Naive thymus-derived CD4-positive, alpha-beta T cell (primary cell): ENCODE measurements at regions of chr20 and their contacts with region 1.

Region 1: DNA sequence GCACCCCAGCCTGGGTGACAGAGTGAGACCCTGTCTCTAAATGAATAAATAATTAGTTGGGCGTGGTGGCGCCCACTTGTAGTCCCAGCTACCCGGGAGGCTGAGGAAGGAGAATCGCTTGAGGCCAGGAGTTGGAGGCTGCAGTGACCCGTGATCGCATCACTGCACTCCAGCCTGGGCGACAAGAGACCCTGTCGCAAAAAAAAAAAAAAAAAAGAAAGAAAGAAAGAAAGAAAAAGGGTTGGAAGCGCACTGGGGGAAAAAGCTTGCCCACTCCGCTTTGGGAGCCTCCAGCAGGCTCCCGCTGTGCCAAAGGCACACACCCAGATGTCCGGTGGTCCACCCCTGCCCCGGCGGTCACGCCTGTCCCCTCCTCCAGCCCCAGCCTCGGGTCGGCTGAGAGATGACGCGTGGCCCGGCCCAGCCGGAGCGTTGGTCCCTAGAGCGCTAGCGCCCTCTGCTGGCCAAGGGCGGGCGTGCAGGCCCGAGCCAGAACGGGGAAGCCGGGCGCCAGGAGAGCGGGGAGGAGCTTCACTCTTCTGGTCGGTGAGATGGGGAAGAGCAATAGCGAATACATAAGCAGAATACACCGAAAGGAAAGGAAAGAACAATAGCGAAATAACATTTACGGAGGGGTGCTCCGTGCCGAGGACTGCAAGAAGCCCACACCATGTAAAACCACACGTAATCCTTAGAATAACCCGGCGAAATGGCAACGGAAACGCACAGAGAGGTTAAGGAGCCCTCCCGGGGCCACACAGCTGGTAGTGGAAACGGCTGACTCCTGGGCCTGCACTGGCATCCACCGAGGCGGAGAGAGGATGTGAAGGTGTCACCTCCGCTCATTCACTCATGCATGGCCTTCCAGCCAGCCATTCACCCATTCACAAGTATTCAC is 41.7 kb downstream of the UBE2V1 start:
- DNase-seq: peak; percentile 75 to 99 (median 88)
- ATAC-seq: peak; percentile 100
- H3K4me3 ChIP-seq: peak overlapping the region; percentile 51
- H3K4me3 Mint-ChIP-seq: peak overlapping the region; percentile 59 to 87 (median 72)
- H3K27ac ChIP-seq: no peak overlapping the region
- H3K27ac Mint-ChIP-seq: peak overlapping the region in 1 of 9 donors; percentile 18
- H3K4me1 ChIP-seq: peaks cover 0 to 4% of the 10 kb centered on the region in 2 donors
- H3K4me1 Mint-ChIP-seq: peaks cover 0 to 5% (median 5%) of the 10 kb centered on the region in 7 donors
- H3K27me3 ChIP-seq: no peaks in the 10 kb centered on the region
- H3K27me3 Mint-ChIP-seq: peaks cover 0 to 5% (median 4%) of the 10 kb centered on the region in 5 donors

Region 2: DNA sequence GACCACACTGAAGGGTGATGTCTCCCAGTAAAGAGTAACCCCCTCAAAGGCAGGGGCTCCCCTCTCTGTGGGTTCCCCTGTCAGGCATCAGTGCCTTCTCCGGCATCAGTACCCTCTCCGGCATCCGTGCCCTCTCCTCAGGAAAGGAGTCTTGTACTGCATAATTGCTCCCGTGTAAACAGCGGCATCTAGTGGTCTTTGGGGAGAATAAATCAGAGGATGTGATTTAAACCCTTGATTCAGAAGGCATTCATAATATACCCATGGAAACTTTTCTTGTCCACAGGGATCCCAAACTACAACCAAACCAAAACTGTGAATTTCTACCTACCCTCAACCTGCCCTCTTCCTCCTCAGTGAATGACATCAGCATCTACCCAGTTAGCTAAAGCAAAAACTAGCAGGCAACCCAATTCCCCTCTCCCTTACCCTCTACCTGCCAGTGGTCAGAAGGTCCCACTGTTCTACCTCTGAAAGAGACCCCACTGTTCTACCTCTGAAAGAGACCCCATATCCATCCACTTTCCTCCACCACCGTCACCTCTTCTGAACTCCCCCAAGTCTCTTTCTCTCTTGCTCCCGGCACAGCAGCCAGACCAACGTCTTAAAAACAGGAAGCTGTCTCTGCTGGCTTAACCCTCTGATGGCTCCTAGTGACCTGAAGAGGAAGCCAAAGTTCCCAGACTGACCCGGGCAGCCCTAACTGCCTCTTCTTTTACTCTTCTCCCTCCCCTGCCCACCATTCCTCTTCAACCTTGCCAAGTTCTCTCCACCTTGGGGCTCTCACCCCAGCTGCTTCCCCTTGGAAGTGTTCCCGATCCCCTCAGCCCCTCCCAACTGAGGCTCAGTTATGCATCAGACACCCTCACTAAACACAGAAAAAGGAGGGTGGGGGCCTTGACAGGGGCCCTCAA is 14.5 kb after region 1 on chr20:
- CTCF ChIA-PET with region 1: interaction called, 55 read pairs
- POLR2A ChIA-PET with region 1: interaction called, 7 read pairs
- intact Hi-C with region 1: loop called in 1 of 2 experiments (anchors 1 kb)
- DNase-seq: peak in 7 of 9 donors; percentile 29 to 63 (median 50)
- ATAC-seq: peak; percentile 87
- H3K4me3 ChIP-seq: peak overlapping the region; percentile 63
- H3K4me3 Mint-ChIP-seq: peak overlapping the region; percentile 75 to 91 (median 86)
- H3K27ac ChIP-seq: peak overlapping the region; percentile 43
- H3K27ac Mint-ChIP-seq: peak overlapping the region; percentile 64 to 93 (median 85)
- H3K4me1 ChIP-seq: peaks cover 9 to 13% of the 10 kb centered on the region in 2 donors
- H3K4me1 Mint-ChIP-seq: peaks cover 20 to 43% (median 32%) of the 10 kb centered on the region in 7 donors
- H3K27me3 ChIP-seq: no peaks in the 10 kb centered on the region
- H3K27me3 Mint-ChIP-seq: no peaks in the 10 kb centered on the region

Region 3: DNA sequence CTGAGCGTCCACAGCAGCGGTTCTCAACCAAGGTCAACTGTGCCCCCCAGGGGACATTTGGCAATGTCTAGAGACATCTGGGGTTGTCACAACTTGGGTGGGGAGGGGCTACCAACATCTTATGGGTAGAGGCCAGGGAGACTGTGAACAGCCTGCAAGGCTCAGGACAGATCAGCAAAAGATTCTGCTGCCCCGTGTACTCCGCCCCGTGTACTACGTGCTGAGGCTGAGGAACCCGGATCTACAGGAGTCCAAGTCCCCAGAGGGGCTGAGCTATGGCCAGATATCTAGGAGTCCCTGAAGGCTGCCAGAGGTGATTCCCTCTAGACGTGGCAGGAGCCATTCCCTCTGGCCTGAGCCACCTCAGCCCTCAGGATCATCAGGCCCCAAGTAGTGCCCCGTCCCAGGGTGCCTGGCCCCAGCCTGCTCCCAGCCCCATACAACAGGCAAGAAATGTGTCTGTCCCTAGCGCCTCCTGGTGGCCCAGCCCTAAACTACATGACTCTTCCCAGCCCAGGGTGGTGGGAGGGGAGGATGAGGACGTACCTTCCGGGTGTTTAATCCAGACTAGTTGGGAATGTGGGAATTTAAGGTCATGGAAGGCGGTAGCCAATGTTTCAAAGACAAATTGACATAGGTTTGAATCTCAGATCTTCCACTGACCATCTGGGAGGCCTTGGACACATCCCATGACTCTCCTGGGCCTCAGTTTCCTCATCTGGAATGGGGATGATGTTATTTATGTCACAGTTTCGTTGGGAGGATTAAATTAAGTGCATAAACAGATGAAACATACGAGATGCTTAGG is 389.4 kb after region 1 on chr20:
- CTCF ChIA-PET with region 1: no interaction called
- POLR2A ChIA-PET with region 1: no interaction called
- intact Hi-C with region 1: loop called in 1 of 2 experiments (anchors 1 kb)
- DNase-seq: peak; percentile 54 to 87 (median 74)
- ATAC-seq: peak; percentile 95
- H3K4me3 ChIP-seq: no peak overlapping the region
- H3K4me3 Mint-ChIP-seq: no peak overlapping the region
- H3K27ac ChIP-seq: no peak overlapping the region
- H3K27ac Mint-ChIP-seq: peak overlapping the region in 1 of 9 donors; percentile 65
- H3K4me1 ChIP-seq: no peaks in the 10 kb centered on the region
- H3K4me1 Mint-ChIP-seq: peaks cover 0 to 18% (median 4%) of the 10 kb centered on the region in 7 donors
- H3K27me3 ChIP-seq: no peaks in the 10 kb centered on the region
- H3K27me3 Mint-ChIP-seq: peaks cover 5 to 14% (median 7%) of the 10 kb centered on the region in 5 donors